BJ (cell line): ENCODE measurements at regions of chr12 and their contacts with region 1.

Region 1: GRCh38 chr12:53065975-53066931 is 12.9 kb downstream of the SPRYD3 start:
- DNase-seq: no peak
- H3K4me3 ChIP-seq: no peak overlapping the region
- H3K27me3 ChIP-seq: no peaks in the 10 kb centered on the region
- CTCF ChIP-seq: peak; percentile 81

Region 2: DNA sequence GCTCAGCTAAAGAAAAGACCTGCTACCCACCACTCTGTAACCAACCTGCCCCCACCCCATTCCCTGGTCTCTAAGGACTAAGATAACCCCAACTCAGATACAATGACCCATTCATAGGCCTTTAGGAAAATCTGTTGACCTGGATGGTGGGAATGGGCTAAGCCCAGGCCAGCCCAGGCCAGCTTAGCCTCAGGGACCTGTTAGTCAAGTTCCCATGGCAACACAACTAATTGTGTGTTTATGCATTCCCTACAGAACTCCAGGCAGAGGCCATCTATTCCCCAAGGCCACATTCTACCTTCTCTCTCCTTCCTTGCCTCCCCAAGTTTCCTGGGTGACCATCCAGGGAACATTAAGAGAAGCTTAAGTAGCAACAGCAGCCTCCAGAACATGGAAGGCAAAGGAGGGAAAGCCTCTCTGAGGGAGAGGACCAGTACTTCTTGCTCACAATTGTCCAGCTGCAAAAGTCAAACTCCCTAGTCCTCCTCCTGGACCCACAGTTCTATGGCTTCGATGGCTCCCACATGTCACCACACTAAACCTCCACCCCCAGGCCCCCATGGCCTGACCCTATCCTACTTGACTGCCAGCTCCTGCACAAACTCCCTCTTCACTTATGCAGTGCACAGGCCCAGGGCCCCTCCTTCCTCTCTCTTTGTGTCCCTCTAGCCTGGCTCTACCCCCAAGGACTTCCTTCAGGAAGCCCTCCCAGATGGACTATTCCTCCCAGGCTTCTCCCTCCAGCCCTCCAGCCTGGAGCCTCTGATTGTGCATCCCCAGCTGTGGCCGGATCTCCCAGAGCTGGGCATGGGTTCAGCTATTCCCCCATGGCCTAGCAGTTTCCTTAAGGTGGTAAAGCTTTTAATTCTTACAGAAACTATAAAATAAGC is 145.1 kb before region 1 on chr12:
- CTCF ChIA-PET with region 1: no interaction called
- POLR2A ChIA-PET with region 1: no interaction called
- DNase-seq: no peak
- H3K4me3 ChIP-seq: no peak overlapping the region
- H3K27me3 ChIP-seq: no peaks in the 10 kb centered on the region
- CTCF ChIP-seq: no peak

Region 3: DNA sequence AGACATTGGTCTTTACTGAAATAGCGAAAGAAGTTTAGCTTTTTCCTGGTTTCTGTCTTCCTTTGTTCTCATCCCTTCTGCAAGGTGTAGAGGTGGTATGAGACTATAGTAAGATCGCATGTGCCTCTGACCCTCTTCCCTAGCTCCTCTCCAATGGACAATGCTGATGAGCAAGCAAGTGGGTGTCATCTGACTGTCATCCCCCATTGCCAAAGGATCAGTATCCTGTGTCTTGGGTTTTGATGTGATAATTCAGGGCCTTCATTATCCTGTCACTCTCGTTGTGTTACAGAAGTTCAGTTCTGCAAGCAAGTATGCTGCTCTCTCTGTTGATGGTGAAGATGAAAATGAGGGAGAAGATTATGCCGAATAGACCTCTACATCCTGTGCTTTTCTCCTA is 26.4 kb before region 1 on chr12:
- CTCF ChIA-PET with region 1: interaction called, 285 read pairs
- POLR2A ChIA-PET with region 1: no interaction called
- DNase-seq: no peak
- H3K4me3 ChIP-seq: no peak overlapping the region
- H3K27me3 ChIP-seq: no peaks in the 10 kb centered on the region
- CTCF ChIP-seq: no peak

Region 4: GRCh38 chr12:53079226-53080117 is 13.2 kb after region 1 on chr12 and contains the start of gene SPRYD3:
- CTCF ChIA-PET with region 1: interaction called, 80 read pairs
- POLR2A ChIA-PET with region 1: interaction called, 8 read pairs
- DNase-seq: peak; percentile 84
- H3K4me3 ChIP-seq: peak within 1 kb of the TSS; percentile 74
- H3K27me3 ChIP-seq: no peaks in the 10 kb centered on the region
- CTCF ChIP-seq: no peak
- polyA plus RNA-seq, gene SPRYD3: 34.8 and 48.0 TPM in 2 replicates

Region 5: DNA sequence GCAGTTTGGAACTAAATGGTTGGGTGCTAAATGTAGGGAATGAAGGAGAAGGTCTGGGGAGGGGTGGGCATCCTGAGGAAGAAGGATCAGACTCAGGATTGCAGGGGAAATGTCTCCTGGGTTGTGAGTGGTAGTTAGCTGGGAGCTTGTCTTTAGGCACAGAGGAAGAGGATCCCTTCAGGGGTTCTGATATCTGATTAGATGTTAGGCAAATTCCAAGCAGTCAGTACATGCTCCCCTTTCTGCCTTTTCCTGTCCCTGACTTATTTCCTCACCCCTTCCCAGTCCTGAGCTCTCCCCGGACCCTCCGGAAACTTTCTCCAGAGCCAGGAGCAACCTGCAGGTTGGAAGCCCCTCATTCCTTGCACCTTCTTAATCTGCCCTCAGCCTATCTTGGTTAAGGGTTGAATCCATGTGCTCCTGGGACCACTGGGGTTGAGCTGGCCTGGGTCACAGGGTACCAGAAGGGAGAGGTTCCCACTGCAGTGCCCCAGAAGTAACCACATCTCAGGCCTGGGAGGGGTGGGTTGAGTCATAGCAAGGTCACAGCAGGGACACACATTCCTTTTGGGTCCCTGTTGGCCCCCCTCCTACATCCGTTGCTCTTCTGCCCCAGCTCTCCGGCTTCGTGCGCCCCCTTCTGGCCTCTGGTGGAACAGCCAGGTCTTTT is 32.9 kb after region 1 on chr12:
- CTCF ChIA-PET with region 1: interaction called, 416 read pairs
- POLR2A ChIA-PET with region 1: interaction called, 7 read pairs
- DNase-seq: peak; percentile 74
- H3K4me3 ChIP-seq: peak overlapping the region; percentile 81
- H3K27me3 ChIP-seq: no peaks in the 10 kb centered on the region
- CTCF ChIP-seq: peak; percentile 94

Region 6: GRCh38 chr12:53123578-53124351 is 57.5 kb after region 1 on chr12:
- CTCF ChIA-PET with region 1: no interaction called
- POLR2A ChIA-PET with region 1: no interaction called
- DNase-seq: no peak
- H3K4me3 ChIP-seq: no peak overlapping the region
- H3K27me3 ChIP-seq: no peaks in the 10 kb centered on the region
- CTCF ChIP-seq: no peak

Region 7: DNA sequence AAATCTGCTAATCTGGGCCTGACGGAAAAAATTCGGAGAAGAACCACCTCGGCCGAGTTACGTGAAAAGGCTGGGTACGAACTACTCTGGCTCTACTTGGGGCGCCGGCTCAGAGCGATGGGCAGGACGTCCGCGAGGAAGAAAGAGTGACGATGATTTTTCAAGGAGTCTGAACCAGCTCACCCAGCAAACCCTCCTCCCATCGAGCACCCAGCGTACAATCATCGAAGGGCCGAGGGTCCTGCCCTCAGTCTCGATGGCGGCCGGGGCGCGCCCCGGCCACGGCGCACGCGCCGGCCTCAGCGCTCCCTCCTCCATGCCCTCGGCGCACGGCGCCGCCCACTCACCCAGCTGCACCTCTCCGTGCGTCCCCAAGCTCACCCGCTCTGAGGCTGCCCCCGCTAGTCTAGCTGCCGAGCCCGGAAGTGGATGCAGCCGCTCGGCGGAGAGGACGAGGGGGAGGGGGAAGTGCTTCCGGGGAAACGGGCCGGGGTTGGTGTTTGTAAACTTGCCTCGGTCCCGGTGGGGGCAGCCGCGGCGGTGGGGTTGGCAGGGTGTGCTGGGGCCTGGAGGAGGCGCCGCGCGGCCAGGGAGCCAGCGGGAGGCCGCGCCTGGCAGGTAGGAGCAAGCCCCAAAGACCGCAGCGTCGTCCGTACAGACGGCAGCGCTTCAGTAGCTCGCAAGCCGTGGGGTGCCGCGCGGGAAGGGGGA is 114.1 kb after region 1 on chr12 and contains the starts of genes CSAD and ZNF740:
- CTCF ChIA-PET with region 1: interaction called, 16 read pairs
- POLR2A ChIA-PET with region 1: no interaction called
- DNase-seq: peak; percentile 83
- H3K4me3 ChIP-seq: peak within 1 kb of the TSS; percentile 86
- H3K27me3 ChIP-seq: no peaks in the 10 kb centered on the region
- CTCF ChIP-seq: no peak
- polyA plus RNA-seq, gene CSAD: 27.3 and 30.7 TPM in 2 replicates
- polyA plus RNA-seq, gene ZNF740: 15.7 and 16.8 TPM in 2 replicates